ENCODE measurements at regions of chr19 and their contacts with region 1.

Region 1: GRCh38 chr19:52171321-52172169 is at the start of gene ZNF836:
- DNase-seq: peak; percentile 84
- H3K4me3 Mint-ChIP-seq: peak within 1 kb of the TSS; percentile 96
- H3K27ac Mint-ChIP-seq: peak within 1 kb of the TSS; percentile 92
- H3K4me1 Mint-ChIP-seq: peaks cover 14% of the 10 kb centered on the region
- H3K27me3 Mint-ChIP-seq: no peaks in the 10 kb centered on the region
- total RNA-seq, gene ZNF836: 7.2 and 8.8 TPM in 2 replicates

Region 2: DNA sequence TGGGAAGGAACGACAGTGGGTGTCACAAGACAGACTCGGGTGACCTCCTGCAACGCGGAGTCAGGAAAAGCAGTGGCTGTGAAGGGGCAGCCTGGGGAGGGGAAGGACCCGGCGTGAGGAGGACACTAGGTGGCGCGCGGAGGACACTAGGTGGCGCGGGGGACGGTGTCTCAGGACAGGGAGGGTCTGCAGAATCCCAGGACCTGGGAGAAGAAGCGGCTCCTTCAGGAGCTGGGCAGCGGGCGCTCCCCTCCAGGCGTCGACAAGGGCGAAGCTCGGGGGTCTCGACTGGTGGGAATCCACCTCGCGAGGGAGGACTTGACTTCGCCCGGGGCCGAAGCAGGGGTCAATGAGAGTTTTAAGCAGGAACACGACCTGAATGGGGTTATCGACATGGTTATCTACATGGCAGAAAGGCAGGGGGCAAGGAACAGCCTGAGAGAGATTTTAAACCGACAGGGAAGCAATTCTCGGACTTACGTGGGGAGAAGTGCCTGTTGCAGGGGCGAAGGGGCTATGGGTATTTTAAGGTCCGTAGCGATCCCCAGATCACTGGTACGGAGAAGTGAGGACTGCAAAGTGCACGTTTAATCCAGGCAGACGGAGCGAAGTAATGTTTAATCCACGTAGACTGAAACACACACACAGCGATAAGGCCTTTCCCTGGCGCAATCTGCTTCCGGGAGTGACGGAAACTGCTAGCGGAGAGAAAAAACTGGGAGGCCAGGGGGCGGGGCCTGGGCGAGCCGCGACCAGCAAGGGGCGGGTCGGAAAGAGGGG is 32.1 kb before region 1 on chr19 and contains the start of gene ZNF616:
- intact Hi-C with region 1: loop called (anchors 1 kb)
- DNase-seq: peak; percentile 93
- H3K4me3 Mint-ChIP-seq: peak within 1 kb of the TSS; percentile 93
- H3K27ac Mint-ChIP-seq: peak within 1 kb of the TSS; percentile 91
- H3K4me1 Mint-ChIP-seq: peaks cover 16% of the 10 kb centered on the region
- H3K27me3 Mint-ChIP-seq: no peaks in the 10 kb centered on the region
- total RNA-seq, gene ZNF616: 6.6 and 8.5 TPM in 2 replicates